Vagina (tissue), 2 donors: ENCODE measurements at regions of chr11 and their contacts with region 1.

Region 1: GRCh38 chr11:107741044-107741823 is 29.4 kb upstream of the SLN start:
- DNase-seq: no peak
- H3K4me3 ChIP-seq: no peak overlapping the region
- H3K27ac ChIP-seq: no peak overlapping the region
- H3K4me1 ChIP-seq: no peaks in the 10 kb centered on the region
- H3K27me3 ChIP-seq: no peaks in the 10 kb centered on the region
- CTCF ChIP-seq: no peak
- POLR2A ChIP-seq: no peak

Region 2: GRCh38 chr11:107689317-107690202 is 51.7 kb before region 1 on chr11:
- intact Hi-C with region 1: no loop called
- DNase-seq: no peak
- H3K4me3 ChIP-seq: no peak overlapping the region
- H3K27ac ChIP-seq: no peak overlapping the region
- H3K4me1 ChIP-seq: peaks cover 7% of the 10 kb centered on the region
- H3K27me3 ChIP-seq: no peaks in the 10 kb centered on the region
- CTCF ChIP-seq: peak in 2 of 3 experiments; percentile 37 to 40
- POLR2A ChIP-seq: no peak

Region 3: GRCh38 chr11:107719557-107720302 is 21.5 kb before region 1 on chr11:
- intact Hi-C with region 1: loop called (anchors 2 kb)
- DNase-seq: no peak
- H3K4me3 ChIP-seq: no peak overlapping the region
- H3K27ac ChIP-seq: no peak overlapping the region
- H3K4me1 ChIP-seq: peaks cover 7% of the 10 kb centered on the region
- H3K27me3 ChIP-seq: no peaks in the 10 kb centered on the region
- CTCF ChIP-seq: no peak
- POLR2A ChIP-seq: no peak